ENCODE measurements at regions of chr5 and their contacts with region 1.

Region 1: GRCh38 chr5:172133359-172134029 is 54.5 kb downstream of the STK10 start:
- DNase-seq: no peak
- H3K4me3 Mint-ChIP-seq: peak overlapping the region; percentile 67
- H3K27ac Mint-ChIP-seq: peak overlapping the region; percentile 90
- H3K4me1 Mint-ChIP-seq: peaks cover 34% of the 10 kb centered on the region
- H3K27me3 Mint-ChIP-seq: no peaks in the 10 kb centered on the region

Region 2: DNA sequence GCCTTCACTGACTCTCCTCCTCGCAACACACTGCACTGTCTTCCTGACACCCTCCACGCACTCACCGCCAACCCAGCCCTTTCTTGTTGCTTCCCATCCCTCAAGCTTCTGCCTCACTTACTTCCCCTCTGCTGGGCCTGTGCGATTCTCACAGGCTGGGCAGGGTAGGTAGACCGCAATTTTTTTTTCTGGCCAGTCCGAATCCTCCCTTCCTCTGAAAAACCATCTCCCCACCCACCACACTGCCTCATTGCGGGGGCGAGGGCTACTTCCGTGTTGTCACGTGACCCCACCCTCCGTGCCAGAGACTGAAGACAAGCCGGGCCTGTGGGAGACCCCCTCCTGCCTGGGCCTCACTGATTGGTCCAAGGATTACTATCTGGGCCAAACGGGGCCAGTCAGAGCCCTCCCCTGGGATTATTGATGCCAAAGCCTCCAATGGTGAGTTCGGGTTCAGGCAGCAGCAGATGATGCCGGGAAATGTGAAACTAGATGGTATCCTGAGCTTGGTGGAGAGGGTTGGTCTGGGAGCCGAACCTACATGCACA is 18.5 kb before region 1 on chr5:
- intact Hi-C with region 1: loop called (anchors 2 kb)
- DNase-seq: peak; percentile 68
- H3K4me3 Mint-ChIP-seq: peak overlapping the region; percentile 78
- H3K27ac Mint-ChIP-seq: peak overlapping the region; percentile 91
- H3K4me1 Mint-ChIP-seq: peaks cover 67% of the 10 kb centered on the region
- H3K27me3 Mint-ChIP-seq: no peaks in the 10 kb centered on the region

Region 3: GRCh38 chr5:172173831-172174153 is 40.3 kb after region 1 on chr5:
- intact Hi-C with region 1: loop called (anchors 5 kb)
- DNase-seq: peak; percentile 74
- H3K4me3 Mint-ChIP-seq: peak overlapping the region; percentile 87
- H3K27ac Mint-ChIP-seq: peak overlapping the region; percentile 100
- H3K4me1 Mint-ChIP-seq: peaks cover 83% of the 10 kb centered on the region
- H3K27me3 Mint-ChIP-seq: no peaks in the 10 kb centered on the region

Region 4: GRCh38 chr5:172380987-172381643 is 247.6 kb after region 1 on chr5:
- intact Hi-C with region 1: no loop called
- DNase-seq: no peak
- H3K4me3 Mint-ChIP-seq: no peak overlapping the region
- H3K27ac Mint-ChIP-seq: no peak overlapping the region
- H3K4me1 Mint-ChIP-seq: no peaks in the 10 kb centered on the region
- H3K27me3 Mint-ChIP-seq: peaks cover 2% of the 10 kb centered on the region